ENCODE measurements at regions of chr10 and their contacts with region 1.

Region 1: GRCh38 chr10:114821293-114821914 is at the start of gene FHIP2A:
- DNase-seq: peak; percentile 43
- ATAC-seq: peak; percentile 94
- H3K4me3 ChIP-seq: peak within 1 kb of the TSS; percentile 80 to 89 (median 84)
- H3K27ac ChIP-seq: peak within 1 kb of the TSS; percentile 82
- H3K4me1 ChIP-seq: peaks cover 26% of the 10 kb centered on the region
- H3K27me3 ChIP-seq: no peaks in the 10 kb centered on the region; a peak in 1 of 5 replicates
- CTCF ChIP-seq: peak; percentile 52
- EP300 ChIP-seq: no peak
- POLR2A ChIP-seq: peak; percentile 21 to 28; a peak in 1 of 4 replicates
- RAD21 ChIP-seq: peak; percentile 58
- total RNA-seq, gene FHIP2A: 8.3 and 9.0 TPM in 2 replicates

Region 2: DNA sequence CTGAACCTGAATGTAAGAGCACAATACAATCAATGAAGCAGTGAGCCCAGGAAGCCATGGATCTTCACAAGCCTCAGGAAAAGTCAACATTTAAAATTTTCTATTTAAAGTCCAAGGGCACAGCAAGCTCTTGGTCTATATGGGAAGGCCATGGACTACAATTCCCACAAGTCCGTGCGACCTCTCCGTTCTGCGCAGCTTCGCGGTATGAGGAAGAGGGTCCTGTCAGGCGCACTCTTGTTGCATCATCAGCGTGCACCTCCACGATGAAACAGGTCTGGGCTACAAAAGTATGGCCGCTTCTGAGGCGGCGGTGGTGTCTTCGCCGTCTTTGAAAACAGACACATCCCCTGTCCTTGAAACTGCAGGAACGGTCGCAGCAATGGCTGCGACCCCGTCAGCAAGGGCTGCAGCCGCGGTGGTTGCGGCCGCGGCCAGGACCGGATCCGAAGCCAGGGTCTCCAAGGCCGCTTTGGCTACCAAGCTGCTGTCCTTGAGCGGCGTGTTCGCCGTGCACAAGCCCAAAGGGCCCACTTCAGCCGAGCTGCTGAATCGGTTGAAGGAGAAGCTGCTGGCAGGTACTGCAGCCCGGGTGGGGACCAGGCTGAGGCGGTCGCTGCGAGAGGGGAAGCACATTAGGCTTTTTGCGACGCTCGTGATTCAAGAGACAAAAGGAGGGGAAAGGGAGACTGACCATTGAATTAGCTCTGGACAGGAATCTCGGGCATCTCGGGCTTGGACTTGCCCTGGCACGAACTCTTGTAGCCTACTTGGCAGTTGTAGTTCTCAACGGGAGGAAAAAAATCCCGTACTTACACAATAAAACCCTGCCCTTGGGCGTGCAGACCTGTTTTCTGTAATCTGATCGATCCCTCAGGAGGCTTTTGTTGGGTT is 116.8 kb after region 1 on chr10 and contains the start of gene TRUB1:
- CTCF ChIA-PET with region 1: no interaction called
- POLR2A ChIA-PET with region 1: interaction called, 13 read pairs
- in situ Hi-C with region 1: no loop called
- intact Hi-C with region 1: no loop called
- DNase-seq: peak; percentile 98
- ATAC-seq: peak; percentile 99
- H3K4me3 ChIP-seq: peak within 1 kb of the TSS; percentile 92 to 99 (median 98)
- H3K27ac ChIP-seq: peak within 1 kb of the TSS; percentile 88
- H3K4me1 ChIP-seq: peaks cover 32% of the 10 kb centered on the region
- H3K27me3 ChIP-seq: no peaks in the 10 kb centered on the region; a peak in 1 of 5 replicates
- CTCF ChIP-seq: no peak
- EP300 ChIP-seq: no peak
- POLR2A ChIP-seq: peak; percentile 89 to 92
- RAD21 ChIP-seq: peak; percentile 26; the same call in 1 of the 2 replicates
- total RNA-seq, gene TRUB1: 38.9 and 47.8 TPM in 2 replicates

Measured in HepG2 (cell line).